Adrenal gland (tissue), 19 donors: ENCODE measurements at regions of chr2 and their contacts with region 1.

Region 1: GRCh38 chr2:54704688-54705605 is 18.5 kb upstream of the EML6 start:
- DNase-seq: peak in 2 of 7 donors; percentile 21
- H3K4me3 ChIP-seq: no peak overlapping the region
- H3K27ac ChIP-seq: no peak overlapping the region
- H3K4me1 ChIP-seq: peaks cover 0 to 16% of the 10 kb centered on the region in 2 donors
- H3K27me3 ChIP-seq: no peaks in the 10 kb centered on the region
- CTCF ChIP-seq: peak; percentile 22 to 88 (median 72)
- POLR2A ChIP-seq: no peak

Region 2: GRCh38 chr2:54106631-54107454 is 598.1 kb before region 1 on chr2:
- intact Hi-C with region 1: loop called in 1 of 2 experiments (anchors 10 kb)
- DNase-seq: peak; percentile 46 to 79 (median 60)
- H3K4me3 ChIP-seq: no peak overlapping the region
- H3K27ac ChIP-seq: no peak overlapping the region
- H3K4me1 ChIP-seq: peaks cover 0 to 27% of the 10 kb centered on the region in 2 donors
- H3K27me3 ChIP-seq: no peaks in the 10 kb centered on the region
- CTCF ChIP-seq: peak; percentile 59 to 84 (median 74)
- POLR2A ChIP-seq: no peak

Region 3: GRCh38 chr2:54522624-54523281 is 182.2 kb before region 1 on chr2:
- intact Hi-C with region 1: loop called in 1 of 2 experiments (anchors 10 kb)
- DNase-seq: peak; percentile 50 to 73 (median 60)
- H3K4me3 ChIP-seq: no peak overlapping the region
- H3K27ac ChIP-seq: peak overlapping the region in 2 of 5 donors; percentile 17 to 77
- H3K4me1 ChIP-seq: peaks cover 10 to 24% of the 10 kb centered on the region in 2 donors
- H3K27me3 ChIP-seq: no peaks in the 10 kb centered on the region
- CTCF ChIP-seq: peak; percentile 43 to 78 (median 66)
- POLR2A ChIP-seq: no peak